Right ventricle myocardium inferior (tissue), 1 donor: ENCODE measurements at regions of chr12 and their contacts with region 1.

Region 1: DNA sequence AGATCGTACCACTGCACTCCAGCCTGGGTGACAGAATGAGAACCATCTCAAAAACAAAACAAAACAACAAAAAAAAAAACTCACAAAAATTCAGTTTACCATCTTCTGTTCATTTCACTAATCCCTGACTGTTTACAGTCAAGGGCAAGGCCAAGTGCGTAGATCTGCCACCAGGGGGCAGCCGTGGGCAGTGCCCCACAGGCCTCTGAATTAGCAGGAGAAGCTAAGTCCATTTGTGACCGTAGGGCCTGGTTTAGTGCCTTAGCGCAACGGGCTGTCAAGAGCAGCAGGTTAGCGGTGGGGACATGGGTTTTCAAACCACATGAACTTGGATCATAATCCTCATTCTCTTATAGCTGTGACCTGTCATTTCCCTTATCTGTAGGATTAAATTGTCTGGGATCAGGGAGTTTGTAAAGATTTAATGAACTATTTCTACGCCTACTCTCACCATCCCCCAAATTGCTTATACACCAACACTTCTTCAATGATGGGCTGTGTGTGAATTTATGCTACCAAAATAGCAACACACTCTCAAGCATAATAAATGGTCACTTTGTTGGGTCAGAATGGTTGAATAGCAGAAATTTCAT is 49.0 kb downstream of the KCTD10 start:
- DNase-seq: peak; percentile 91
- ATAC-seq: peak; percentile 90

Region 2: GRCh38 chr12:109477185-109477962 is 49.2 kb after region 1 on chr12 and contains the starts of genes KCTD10 and UBE3B:
- intact Hi-C with region 1: loop called (anchors 2 kb)
- DNase-seq: peak; percentile 93
- ATAC-seq: peak; percentile 98
- total RNA-seq, gene KCTD10: 32.2 TPM
- total RNA-seq, gene UBE3B: 56.1 TPM

Region 3: GRCh38 chr12:109597795-109598427 is 169.8 kb after region 1 on chr12:
- intact Hi-C with region 1: loop called (anchors 10 kb)
- DNase-seq: peak; percentile 94
- ATAC-seq: peak; percentile 90

Region 4: GRCh38 chr12:109775172-109775881 is 347.2 kb after region 1 on chr12:
- intact Hi-C with region 1: loop called (anchors 2 kb)
- DNase-seq: peak; percentile 84
- ATAC-seq: peak; percentile 82

Region 5: DNA sequence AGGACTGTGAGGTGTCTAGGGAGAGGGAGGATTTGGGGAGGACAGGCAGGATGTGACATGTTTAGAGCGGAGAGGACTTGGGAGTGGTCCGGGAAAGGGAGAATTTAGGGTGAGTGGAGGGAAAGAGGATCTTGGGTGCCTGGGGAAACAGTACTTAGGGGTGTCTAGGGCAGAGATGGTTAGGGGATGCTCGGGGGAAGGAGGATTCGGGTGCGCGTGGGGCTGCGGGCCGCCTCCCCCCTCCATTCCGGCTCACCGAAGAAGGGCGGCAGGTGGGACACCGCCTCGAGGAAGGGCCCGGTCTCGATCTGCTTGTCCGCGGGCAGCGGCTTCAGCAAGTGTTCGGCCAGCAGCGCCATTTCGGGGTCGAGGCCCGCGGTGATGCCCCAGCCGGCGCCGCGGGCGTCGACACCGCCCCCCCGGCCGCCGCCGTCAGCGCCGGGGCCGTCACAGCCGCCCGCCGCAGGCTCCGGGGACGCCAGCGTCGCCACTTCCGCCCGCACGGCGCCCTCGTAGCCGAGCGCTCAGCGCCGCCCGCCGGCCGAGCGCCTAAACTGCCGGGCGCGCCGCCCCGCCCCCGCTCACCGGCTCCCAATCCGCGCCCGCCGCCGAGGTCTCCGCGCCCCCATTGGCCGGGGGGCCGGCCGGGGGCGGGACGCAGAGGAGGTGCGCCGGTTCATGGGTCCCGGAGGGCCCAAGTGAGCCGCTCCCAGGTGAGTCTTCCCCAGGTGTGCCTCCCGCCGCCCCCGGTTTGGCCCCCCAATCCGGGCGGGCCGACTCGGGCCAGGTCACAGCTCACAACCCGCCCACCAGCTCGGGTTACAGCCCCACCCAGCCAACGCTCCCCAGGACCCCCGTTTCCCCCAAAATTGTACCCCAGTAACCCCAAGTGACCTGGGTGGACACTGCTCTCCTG is 452.1 kb after region 1 on chr12 and contains the start of gene GLTP:
- intact Hi-C with region 1: loop called (anchors 5 kb)
- DNase-seq: peak; percentile 96
- ATAC-seq: peak; percentile 98
- total RNA-seq, gene GLTP: 23.3 TPM